ENCODE measurements at regions of chr6 and their contacts with region 1.

Region 1: GRCh38 chr6:16206595-16207037 is 31.8 kb upstream of the GMPR start:
- DNase-seq: peak; percentile 64
- H3K4me3 ChIP-seq: no peak overlapping the region
- H3K27ac ChIP-seq: no peak overlapping the region
- H3K4me1 ChIP-seq: no peaks in the 10 kb centered on the region
- H3K27me3 ChIP-seq: no peaks in the 10 kb centered on the region
- CTCF ChIP-seq: peak; percentile 78 to 93 (median 92)
- POLR2A ChIP-seq: no peak

Region 2: DNA sequence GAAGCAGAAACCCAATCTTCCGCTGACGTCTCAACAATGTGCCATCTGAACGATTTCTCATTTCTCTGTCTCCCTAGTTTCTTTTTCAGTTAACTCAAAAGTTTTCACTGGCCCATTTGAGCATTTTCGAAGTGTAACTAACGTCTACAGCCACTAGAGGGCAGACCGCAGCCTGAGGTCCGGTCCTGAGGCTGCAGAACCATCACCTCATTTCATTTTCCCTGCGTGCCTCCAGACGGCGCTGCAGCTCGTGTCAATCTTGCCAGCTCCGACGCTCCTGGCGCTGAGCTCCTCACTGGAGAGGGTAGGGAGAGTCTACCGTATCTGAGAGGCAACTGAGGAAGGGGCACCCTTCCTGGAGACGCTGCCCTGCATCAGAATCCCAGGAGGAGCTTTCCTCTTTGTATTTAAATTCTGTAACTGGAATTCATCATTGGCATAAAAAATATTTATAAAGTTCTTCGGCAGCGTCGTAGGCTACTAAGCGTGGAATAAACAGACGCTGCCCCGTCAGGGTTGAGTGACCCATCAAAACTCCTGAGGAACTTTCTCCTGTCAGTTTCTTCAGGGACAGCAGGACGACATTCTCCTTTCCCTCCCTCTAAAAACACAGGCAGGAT is 515.3 kb before region 1 on chr6:
- intact Hi-C with region 1: loop called (anchors 5 kb)
- DNase-seq: peak; percentile 77
- H3K4me3 ChIP-seq: no peak overlapping the region
- H3K27ac ChIP-seq: no peak overlapping the region
- H3K4me1 ChIP-seq: no peaks in the 10 kb centered on the region
- H3K27me3 ChIP-seq: no peaks in the 10 kb centered on the region
- CTCF ChIP-seq: peak; percentile 87 to 100 (median 99)
- POLR2A ChIP-seq: no peak

Region 3: DNA sequence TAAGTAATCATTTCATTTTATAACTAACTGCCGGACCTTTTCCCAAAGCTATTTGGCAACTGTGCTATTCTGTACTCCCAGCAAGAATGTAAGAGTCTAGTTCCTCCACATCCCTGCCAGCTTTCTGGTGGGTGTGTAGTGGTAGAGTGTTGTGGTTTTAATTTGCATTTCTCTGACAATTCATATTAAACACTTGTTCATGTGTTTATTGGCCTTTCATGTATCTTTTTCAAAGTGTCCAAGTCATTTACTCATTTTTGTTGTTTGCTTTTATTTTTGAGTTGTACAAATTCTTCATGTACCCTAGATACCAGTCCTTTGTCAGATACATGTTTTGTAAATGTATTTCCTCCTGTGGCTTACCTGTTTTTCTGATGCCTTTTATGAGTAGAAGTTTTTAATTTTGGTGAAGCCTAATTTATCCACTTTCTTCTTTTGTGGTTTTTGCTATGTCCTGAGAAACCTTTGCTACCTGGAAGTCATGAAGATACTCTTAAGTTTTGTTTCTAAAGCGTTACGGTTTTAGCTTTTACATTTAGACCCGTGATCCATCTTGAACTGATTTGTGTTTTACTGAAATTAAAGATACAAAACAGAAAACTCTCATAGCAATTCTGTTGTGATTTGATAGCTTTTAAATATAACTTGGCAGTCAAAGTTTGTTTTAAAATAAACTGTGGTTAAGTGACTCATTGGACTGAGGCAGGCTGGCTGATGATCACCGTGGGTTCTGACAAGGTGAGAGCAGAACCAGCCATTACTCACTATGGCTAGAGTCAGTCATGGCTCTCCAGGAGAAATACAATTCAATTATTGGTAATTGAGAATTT is 69.8 kb before region 1 on chr6:
- intact Hi-C with region 1: no loop called
- DNase-seq: peak; percentile 13
- H3K4me3 ChIP-seq: no peak overlapping the region
- H3K27ac ChIP-seq: peak overlapping the region; percentile 4 to 25
- H3K4me1 ChIP-seq: peaks cover 26% of the 10 kb centered on the region
- H3K27me3 ChIP-seq: no peaks in the 10 kb centered on the region
- CTCF ChIP-seq: no peak
- POLR2A ChIP-seq: no peak

Region 4: GRCh38 chr6:16338577-16339262 is 132.1 kb after region 1 on chr6:
- intact Hi-C with region 1: no loop called
- DNase-seq: peak; percentile 31
- H3K4me3 ChIP-seq: no peak overlapping the region
- H3K27ac ChIP-seq: no peak overlapping the region
- H3K4me1 ChIP-seq: no peaks in the 10 kb centered on the region
- H3K27me3 ChIP-seq: no peaks in the 10 kb centered on the region
- CTCF ChIP-seq: peak in 3 of 4 experiments; percentile 14 to 49 (median 28)
- POLR2A ChIP-seq: no peak

Measured in prostate gland (tissue), 2 donors.